A673 (cell line): ENCODE measurements at regions of chr5 and their contacts with region 1.

Region 1: GRCh38 chr5:167064198-167064776 is 1227.2 kb upstream of the WWC1 start:
- DNase-seq: peak; percentile 88
- H3K4me3 ChIP-seq: peak overlapping the region; percentile 16
- H3K27ac ChIP-seq: peak overlapping the region; percentile 57
- H3K4me1 ChIP-seq: peaks cover 26% of the 10 kb centered on the region
- H3K27me3 ChIP-seq: no peaks in the 10 kb centered on the region
- CTCF ChIP-seq: no peak

Region 2: DNA sequence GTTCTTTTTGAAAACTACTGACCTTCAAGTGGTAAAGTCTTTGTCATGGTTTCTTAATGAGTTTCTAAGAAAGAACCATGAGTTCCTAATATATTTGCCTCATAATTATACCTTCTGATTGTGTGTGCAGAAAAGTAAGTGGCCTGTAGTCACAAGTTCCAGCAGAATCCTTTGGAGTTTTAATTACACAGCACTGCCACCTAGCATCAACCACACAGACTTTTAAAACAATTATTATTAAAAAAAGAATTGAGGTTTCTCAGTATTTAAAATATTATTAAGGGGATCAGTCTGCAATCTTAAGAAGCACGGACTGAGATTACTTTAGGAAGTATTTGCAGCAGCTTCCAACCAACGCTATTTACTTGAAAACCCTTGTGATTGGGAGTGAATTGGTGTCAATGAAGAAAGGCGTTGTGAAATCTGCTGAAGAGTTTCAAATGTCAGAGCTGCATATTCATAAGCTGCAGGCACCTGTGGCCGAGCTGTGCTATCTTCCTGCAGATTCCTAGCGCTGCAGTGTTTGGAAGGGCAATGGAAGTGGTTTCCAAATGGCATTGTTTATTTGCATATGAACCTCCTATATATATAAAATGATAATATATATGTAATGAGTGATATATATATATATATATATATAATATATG is 152.9 kb after region 1 on chr5:
- CTCF ChIA-PET with region 1: no interaction called
- POLR2A ChIA-PET with region 1: no interaction called
- intact Hi-C with region 1: loop called (anchors 10 kb)
- DNase-seq: peak; percentile 33
- H3K4me3 ChIP-seq: no peak overlapping the region
- H3K27ac ChIP-seq: no peak overlapping the region
- H3K4me1 ChIP-seq: no peaks in the 10 kb centered on the region
- H3K27me3 ChIP-seq: no peaks in the 10 kb centered on the region
- CTCF ChIP-seq: no peak; the same call in 1 of the 2 replicates

Region 3: GRCh38 chr5:167460449-167461020 is 396.2 kb after region 1 on chr5:
- CTCF ChIA-PET with region 1: no interaction called
- POLR2A ChIA-PET with region 1: no interaction called
- intact Hi-C with region 1: no loop called
- DNase-seq: no peak
- H3K4me3 ChIP-seq: no peak overlapping the region
- H3K27ac ChIP-seq: no peak overlapping the region
- H3K4me1 ChIP-seq: no peaks in the 10 kb centered on the region
- H3K27me3 ChIP-seq: no peaks in the 10 kb centered on the region
- CTCF ChIP-seq: no peak